ENCODE measurements at regions of chr2 and their contacts with region 1.

Region 1: GRCh38 chr2:98649135-98649991 is 41.0 kb downstream of the UNC50 start:
- DNase-seq: peak; percentile 48
- H3K4me3 ChIP-seq: no peak overlapping the region
- H3K27ac ChIP-seq: no peak overlapping the region
- H3K27me3 ChIP-seq: peaks cover 2% of the 10 kb centered on the region
- CTCF ChIP-seq: peak; percentile 100

Region 2: DNA sequence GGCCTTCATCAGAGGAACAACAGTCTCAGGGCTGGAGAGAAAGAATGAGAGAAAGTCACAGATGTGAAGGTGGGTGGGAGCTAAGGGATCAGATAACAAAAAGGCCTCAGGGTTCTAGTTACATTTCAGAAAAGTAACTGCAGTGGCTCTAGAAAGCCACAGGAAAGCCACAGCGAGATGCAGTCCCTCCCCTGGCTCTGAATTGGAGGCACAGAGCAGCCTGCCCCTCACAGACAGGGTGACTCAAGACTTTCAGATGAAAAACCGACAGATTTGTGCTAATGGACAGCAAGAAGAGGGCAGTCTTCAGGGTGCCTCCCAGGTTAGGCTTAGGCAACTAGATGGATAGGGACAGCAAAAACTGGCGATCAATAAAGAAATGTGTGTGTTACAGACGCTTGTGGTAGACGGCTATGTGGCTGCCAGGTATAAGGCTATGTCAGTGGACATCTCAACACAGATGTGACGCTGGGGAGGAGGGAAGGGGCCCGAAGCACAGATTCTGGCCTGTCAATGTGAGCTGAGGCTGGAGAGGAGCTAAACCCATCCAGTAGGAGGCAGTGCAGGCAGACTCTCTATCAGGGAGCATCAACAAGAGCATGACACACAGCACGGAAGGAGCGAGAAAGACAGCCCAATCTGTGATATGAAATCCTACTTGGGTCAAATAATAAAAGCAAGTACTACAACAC is 14.8 kb before region 1 on chr2:
- CTCF ChIA-PET with region 1: interaction called, 11 read pairs
- POLR2A ChIA-PET with region 1: no interaction called
- DNase-seq: no peak
- H3K4me3 ChIP-seq: no peak overlapping the region
- H3K27ac ChIP-seq: no peak overlapping the region
- H3K27me3 ChIP-seq: peaks cover 14% of the 10 kb centered on the region
- CTCF ChIP-seq: peak; percentile 22; the same call in 1 of the 2 replicates

Region 3: GRCh38 chr2:98664327-98664726 is 15.0 kb after region 1 on chr2:
- CTCF ChIA-PET with region 1: interaction called, 10 read pairs
- POLR2A ChIA-PET with region 1: no interaction called
- DNase-seq: no peak
- H3K4me3 ChIP-seq: no peak overlapping the region
- H3K27ac ChIP-seq: no peak overlapping the region
- H3K27me3 ChIP-seq: no peaks in the 10 kb centered on the region
- CTCF ChIP-seq: no peak

Region 4: GRCh38 chr2:98835831-98836385 is 186.5 kb after region 1 on chr2:
- CTCF ChIA-PET with region 1: interaction called, 25 read pairs
- POLR2A ChIA-PET with region 1: no interaction called
- DNase-seq: no peak
- H3K4me3 ChIP-seq: no peak overlapping the region
- H3K27ac ChIP-seq: no peak overlapping the region
- H3K27me3 ChIP-seq: no peaks in the 10 kb centered on the region
- CTCF ChIP-seq: no peak

Region 5: DNA sequence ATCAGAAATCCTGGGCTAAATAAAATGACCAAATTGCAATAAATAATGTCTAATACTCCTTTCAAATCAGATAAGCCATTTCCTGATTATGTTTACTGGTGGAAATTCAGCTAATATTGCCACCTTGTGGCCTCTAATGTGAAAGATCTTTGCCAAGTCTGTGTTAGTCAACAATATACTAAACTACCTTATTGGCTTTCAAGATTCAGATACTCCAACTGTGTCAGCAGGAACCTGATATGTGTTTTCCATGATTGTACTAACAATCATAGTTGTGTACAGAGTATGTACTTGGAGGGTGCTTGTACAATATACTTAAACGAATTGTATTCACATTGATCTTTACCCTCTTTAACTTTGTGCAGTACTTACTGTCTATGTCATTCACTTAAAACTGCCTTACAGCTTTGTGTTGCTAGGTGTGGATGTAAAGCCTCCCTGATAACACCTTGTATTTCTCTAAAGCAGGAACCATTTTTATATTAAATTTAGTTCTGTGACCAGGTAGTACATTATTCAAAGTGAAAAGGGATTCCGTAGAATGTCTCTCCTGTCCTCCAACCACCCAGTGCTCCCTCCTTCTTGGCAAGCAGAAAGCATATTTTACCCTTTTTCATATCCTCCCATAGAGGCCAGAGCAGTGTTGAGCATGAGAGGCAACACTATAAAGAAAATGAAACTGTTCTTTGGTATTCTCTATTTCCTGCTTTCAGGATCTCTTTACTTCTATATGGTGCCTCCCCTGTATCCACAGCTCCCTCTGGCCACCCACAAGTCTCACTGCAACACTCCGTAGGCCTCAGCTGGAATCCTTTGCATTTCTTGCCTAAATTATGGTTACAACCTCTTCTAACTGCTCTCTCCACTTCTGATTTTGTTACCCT is 417.0 kb after region 1 on chr2:
- CTCF ChIA-PET with region 1: interaction called, 105 read pairs
- POLR2A ChIA-PET with region 1: no interaction called
- DNase-seq: peak; percentile 45
- H3K4me3 ChIP-seq: no peak overlapping the region
- H3K27ac ChIP-seq: no peak overlapping the region
- H3K27me3 ChIP-seq: no peaks in the 10 kb centered on the region
- CTCF ChIP-seq: peak; percentile 84